ENCODE measurements at regions of chr6 and their contacts with region 1.

Region 1: GRCh38 chr6:52399511-52400312 is 20.4 kb upstream of the EFHC1 start:
- DNase-seq: no peak
- ATAC-seq: peak in 3 of 4 donors; percentile 46 to 63 (median 54)
- H3K4me3 ChIP-seq: no peak overlapping the region
- H3K27ac ChIP-seq: no peak overlapping the region
- H3K4me1 ChIP-seq: peaks cover 0 to 17% (median 0%) of the 10 kb centered on the region in 12 donors
- H3K27me3 ChIP-seq: no peaks in the 10 kb centered on the region
- CTCF ChIP-seq: peak; percentile 68 to 84 (median 76)
- POLR2A ChIP-seq: no peak

Region 2: DNA sequence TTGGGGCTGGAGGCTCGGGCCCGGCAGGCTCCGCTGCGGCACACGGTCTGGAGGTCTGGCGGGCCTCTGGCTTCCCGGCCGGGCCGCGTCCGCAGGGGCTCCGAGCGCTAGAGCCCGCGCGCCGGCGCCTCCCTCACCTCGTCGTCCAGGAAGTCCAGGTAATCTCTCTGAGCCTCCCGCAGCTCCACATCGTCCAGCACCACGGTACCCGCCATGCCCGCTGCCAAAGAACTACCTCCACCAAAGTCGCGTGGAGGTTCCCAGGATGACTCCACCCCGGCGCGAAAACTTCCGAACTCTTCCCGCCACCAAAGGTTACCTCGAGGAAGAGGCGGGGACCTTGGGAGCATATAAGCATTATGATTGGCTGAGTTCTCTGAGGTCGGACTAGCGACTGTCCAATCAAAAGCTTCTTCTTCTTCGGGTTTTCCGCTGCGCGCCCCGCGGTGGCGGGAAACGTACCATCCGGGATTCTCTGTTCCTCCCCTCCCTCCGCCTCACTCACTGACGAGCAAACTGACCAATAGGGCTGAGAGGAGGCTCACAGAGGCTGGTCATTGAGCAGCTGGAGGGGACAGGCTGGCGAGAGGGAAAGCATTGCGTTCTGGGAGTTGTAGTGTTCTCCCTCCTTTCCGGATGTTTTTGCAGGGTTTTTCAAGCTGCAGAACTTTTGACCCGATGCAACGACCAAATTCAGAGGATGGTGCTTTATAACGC is 115.1 kb before region 1 on chr6 and contains the start of gene MCM3:
- intact Hi-C with region 1: loop called (anchors 1 to 5 kb)
- DNase-seq: peak; percentile 96 to 98 (median 98)
- ATAC-seq: peak; percentile 100
- H3K4me3 ChIP-seq: peak within 1 kb of the TSS; percentile 57 to 99 (median 80)
- H3K27ac ChIP-seq: peak within 1 kb of the TSS in 11 of 12 donors; percentile 32 to 79 (median 67)
- H3K4me1 ChIP-seq: peaks cover 0 to 32% (median 12%) of the 10 kb centered on the region in 12 donors
- H3K27me3 ChIP-seq: no peaks in the 10 kb centered on the region
- CTCF ChIP-seq: peak in 5 of 12 donors; percentile 2 to 43 (median 19)
- POLR2A ChIP-seq: peak in 1 of 2 donors; percentile 50
- total RNA-seq, gene MCM3: 18.5 to 36.5 (median 25.0) TPM

Region 3: DNA sequence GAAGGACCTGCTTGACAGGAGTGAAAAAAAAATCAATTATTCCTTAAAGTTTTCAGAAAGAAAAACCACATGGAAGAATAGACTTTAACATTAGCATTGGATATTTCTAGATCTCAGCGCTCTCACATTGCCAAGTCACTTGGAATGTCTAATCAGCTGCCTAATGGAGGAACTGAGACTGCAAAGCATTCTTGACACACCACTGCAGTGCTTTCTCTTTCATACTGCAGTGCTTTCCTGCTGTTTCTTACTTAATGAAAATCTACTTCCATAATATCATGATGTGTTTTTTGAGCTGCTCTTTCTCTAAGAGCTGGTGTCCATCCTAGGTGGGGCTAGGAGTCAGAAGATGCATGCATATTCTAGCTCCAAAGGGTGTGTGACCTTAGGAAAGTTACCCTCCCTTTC is 94.7 kb before region 1 on chr6:
- intact Hi-C with region 1: loop called in 1 of 10 experiments (anchors 5 kb)
- DNase-seq: no peak
- ATAC-seq: peak in 3 of 4 donors; percentile 71 to 81 (median 76)
- H3K4me3 ChIP-seq: peak overlapping the region in 3 of 12 donors; percentile 4 to 7 (median 6)
- H3K27ac ChIP-seq: peak overlapping the region in 8 of 12 donors; percentile 3 to 90 (median 36)
- H3K4me1 ChIP-seq: peaks cover 0 to 56% (median 15%) of the 10 kb centered on the region in 12 donors
- H3K27me3 ChIP-seq: no peaks in the 10 kb centered on the region
- CTCF ChIP-seq: no peak
- POLR2A ChIP-seq: no peak